Head of caudate nucleus (tissue), 42 donors: ENCODE measurements at regions of chr4 and their contacts with region 1.

Region 1: DNA sequence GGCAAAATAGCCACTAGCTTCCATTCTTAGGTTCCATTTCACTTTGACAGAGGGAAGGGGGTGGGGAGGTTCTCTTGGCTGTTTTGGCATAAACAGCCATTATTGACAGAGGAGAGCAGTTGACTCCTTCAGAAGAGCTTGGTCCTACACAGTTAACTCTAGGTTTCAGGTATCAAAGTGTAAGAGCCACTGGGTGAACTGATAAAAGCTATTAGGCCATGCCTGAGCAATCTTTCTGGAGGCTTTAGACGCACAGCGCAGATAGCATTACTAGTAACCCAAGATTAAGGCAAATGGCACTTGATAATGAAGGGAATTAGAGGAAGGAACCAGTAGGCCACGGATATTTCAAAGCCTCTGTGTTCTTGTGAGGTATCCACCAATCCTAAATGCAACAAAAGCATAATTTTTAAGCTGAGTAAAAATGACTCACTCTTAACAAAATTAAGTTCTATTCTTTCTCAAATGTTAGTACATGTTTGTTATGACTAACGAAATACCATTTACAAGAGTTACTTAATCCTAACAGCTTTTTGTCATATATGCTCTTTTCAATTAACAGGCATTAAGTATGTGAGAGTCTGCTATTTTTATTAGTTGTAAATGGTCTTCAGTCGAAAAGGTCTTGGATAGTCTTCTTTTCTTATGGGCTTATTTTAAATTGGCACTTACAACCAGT is 53.6 kb downstream of the SLC7A11 start:
- DNase-seq: no peak

Region 2: DNA sequence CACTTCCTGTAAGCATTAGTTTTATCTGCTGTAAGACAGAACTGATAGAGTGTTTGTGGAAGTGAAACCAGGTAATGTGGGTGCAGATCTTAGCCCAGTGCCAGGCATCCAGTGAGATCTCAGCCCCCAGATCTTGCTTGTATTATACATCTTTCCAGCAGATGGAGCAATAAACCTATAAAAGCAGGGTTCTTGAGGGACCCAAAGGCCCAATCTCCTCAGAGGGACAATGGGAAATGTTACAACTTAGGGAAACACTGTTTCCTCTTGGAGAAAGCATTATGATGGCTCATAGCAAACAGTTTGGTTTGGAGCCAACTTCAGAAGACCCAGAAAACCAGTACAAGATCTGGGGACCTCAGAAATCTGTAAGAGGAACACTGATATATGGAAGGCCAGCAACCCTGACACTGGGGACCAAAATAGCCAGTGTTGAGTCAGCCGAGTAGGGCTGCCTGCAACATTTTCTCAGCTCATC is 152.7 kb before region 1 on chr4:
- intact Hi-C with region 1: loop called (anchors 5 kb)
- DNase-seq: peak in 24 of 42 donors; percentile 6 to 66 (median 26)

Region 3: GRCh38 chr4:138348055-138348454 is 159.5 kb after region 1 on chr4:
- intact Hi-C with region 1: no loop called
- DNase-seq: no peak